ENCODE measurements at regions of chr1 and their contacts with region 1.

Region 1: DNA sequence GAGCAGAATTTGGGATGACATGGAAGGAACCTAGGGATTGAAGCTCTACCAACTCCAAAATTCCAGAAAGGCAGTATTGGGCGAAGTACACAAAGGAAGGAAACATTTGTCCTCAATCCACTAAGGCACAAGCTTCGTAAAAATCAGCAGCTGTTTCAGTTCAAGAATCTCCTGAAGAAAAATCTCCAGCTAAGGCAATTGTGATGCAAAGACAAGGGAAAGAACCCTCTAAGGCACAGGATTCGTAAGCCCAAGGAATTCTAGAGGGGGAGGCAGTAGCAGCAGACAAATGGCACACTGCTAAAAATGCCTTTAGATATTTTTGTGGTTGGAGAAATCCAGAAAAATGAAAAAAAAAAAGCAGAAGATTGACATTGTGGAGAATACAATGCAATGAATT is 64.5 kb upstream of the PLPPR5 start:
- DNase-seq: no peak
- ATAC-seq: no peak; the same call in 1 of the 2 replicates
- H3K4me3 ChIP-seq: no peak overlapping the region
- H3K27ac ChIP-seq: no peak overlapping the region
- H3K4me1 ChIP-seq: peaks cover 5% of the 10 kb centered on the region; the same call in 1 of the 2 replicates
- H3K27me3 ChIP-seq: no peaks in the 10 kb centered on the region
- CTCF ChIP-seq: no peak

Region 2: DNA sequence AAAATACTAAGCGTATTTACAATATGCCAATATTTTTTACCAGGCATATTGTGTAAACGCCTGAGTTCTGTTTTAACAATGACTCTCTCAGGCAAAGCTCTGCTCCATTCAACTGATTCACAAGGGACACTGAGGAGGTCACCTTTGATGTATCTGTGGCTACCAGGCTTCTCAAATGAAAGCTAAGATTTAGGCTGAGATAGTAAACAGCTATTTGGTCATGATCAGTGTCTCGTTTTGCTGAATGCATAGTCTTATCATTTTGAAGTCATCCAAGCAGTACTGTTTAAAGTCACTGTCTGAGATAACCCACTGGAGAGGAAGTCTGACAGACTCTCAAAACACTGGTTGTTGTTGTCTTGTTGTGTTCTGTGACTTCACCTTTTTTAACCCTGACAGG is 50.8 kb before region 1 on chr1:
- CTCF ChIA-PET with region 1: no interaction called
- POLR2A ChIA-PET with region 1: no interaction called
- intact Hi-C with region 1: loop called (anchors 5 kb)
- DNase-seq: peak; percentile 13
- ATAC-seq: peak; percentile 89
- H3K4me3 ChIP-seq: no peak overlapping the region
- H3K27ac ChIP-seq: no peak overlapping the region
- H3K4me1 ChIP-seq: no peaks in the 10 kb centered on the region
- H3K27me3 ChIP-seq: no peaks in the 10 kb centered on the region
- CTCF ChIP-seq: no peak

Measured in PC-3 (cell line).